ENCODE measurements at regions of chr2 and their contacts with region 1.

Region 1: DNA sequence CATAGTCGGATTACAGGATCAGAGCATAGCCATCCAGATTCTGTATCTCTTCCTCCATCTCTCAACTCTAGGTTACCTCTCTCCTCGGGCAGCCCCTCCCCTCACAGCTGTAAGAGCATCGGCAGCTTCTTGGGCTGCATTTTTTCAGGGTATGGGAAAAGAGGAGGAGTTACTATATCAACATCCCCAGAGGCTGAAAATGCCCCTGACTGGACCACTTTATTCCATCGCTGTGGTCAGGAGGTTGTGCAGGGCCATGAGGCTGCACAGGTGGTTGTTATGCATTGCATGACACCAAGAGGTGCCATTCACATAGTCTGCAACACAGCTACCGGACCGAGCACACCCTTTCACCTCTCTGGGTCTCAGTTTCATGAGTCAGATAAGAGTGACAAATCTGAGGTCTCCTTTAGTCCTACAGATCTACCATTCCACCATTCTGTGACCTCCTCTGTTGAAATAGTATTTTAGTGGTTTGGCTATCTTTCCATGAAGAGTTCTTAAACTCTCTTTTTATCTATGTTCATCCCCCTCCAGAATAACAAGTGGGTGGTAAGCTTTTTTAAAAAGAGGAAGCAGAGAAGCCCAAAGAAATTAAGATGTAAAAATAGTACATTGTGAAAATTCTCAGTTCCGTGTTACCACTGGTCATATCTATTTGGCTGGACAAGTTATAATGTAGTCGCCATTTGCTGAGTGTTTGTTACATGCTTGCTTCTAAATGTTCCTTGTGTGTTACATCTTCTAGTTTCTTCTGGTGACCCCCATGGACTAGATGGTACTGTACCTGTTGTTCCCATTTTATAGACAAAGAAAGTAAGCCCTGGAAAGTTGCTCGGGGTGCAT is 56.6 kb upstream of the SLC1A4 start:
- DNase-seq: peak; percentile 71
- CTCF ChIP-seq: no peak

Region 2: DNA sequence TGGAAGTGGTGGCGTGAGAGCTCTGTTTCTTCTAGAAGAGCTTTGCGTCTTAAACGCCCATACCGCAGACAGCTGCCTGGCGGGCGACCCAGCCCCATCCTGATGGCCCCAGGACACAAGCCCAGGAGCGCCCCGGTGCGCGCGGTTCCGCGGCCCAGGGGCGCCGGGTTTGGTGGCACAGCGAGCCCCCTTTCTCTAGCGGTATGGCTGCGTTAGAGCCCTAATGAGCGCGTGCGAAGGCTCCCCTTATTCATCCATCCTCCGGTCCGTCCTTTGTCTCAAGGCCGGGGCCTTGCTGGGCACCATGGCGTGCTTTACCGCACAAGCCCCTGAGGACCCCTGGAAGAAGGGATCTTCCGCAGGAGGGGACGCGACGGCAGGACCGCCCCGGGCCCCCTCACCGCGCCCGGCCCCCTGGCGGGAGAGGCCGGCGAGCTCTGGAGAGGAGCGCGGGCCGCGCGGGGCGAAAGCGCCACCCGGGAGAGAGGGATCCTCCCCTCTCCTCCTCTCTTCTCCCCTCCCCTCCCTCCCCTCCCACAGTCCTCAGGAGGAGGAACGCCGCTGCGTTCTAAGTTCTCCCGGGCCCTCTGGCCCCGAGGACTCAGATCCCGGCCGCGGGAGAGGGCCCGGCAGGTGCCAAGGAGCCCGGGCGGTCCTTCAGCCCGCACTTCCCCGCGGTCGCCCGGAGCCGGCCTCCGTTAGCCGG is 56.0 kb after region 1 on chr2:
- CTCF ChIA-PET with region 1: interaction called, 5 read pairs
- POLR2A ChIA-PET with region 1: interaction called, 14 read pairs
- DNase-seq: peak; percentile 65
- CTCF ChIP-seq: peak; percentile 27

Region 3: GRCh38 chr2:64999754-65000153 is 67.2 kb after region 1 on chr2:
- CTCF ChIA-PET with region 1: no interaction called
- POLR2A ChIA-PET with region 1: no interaction called
- DNase-seq: no peak
- CTCF ChIP-seq: no peak

Region 4: GRCh38 chr2:65227425-65228262 is 295.1 kb after region 1 on chr2 and contains the start of gene ACTR2:
- CTCF ChIA-PET with region 1: no interaction called
- POLR2A ChIA-PET with region 1: no interaction called
- DNase-seq: peak; percentile 94
- CTCF ChIP-seq: no peak